T-cell (primary cell): ENCODE measurements at regions of chr13 and their contacts with region 1.

Region 1: GRCh38 chr13:64791373-64791772 is 2438.8 kb downstream of the PCDH9 start:
- DNase-seq: no peak
- ATAC-seq: no peak
- H3K4me3 ChIP-seq: no peak overlapping the region
- H3K4me3 Mint-ChIP-seq: no peak overlapping the region
- H3K27ac ChIP-seq: no peak overlapping the region
- H3K27ac Mint-ChIP-seq: no peak overlapping the region
- H3K4me1 ChIP-seq: no peaks in the 10 kb centered on the region
- H3K4me1 Mint-ChIP-seq: no peaks in the 10 kb centered on the region
- H3K27me3 ChIP-seq: no peaks in the 10 kb centered on the region
- H3K27me3 Mint-ChIP-seq: no peaks in the 10 kb centered on the region

Region 2: GRCh38 chr13:64553411-64554129 is 237.8 kb before region 1 on chr13:
- CTCF ChIA-PET with region 1: no interaction called
- POLR2A ChIA-PET with region 1: no interaction called
- DNase-seq: no peak
- ATAC-seq: no peak
- H3K4me3 ChIP-seq: no peak overlapping the region
- H3K4me3 Mint-ChIP-seq: no peak overlapping the region
- H3K27ac ChIP-seq: no peak overlapping the region
- H3K27ac Mint-ChIP-seq: no peak overlapping the region
- H3K4me1 ChIP-seq: no peaks in the 10 kb centered on the region
- H3K4me1 Mint-ChIP-seq: no peaks in the 10 kb centered on the region
- H3K27me3 ChIP-seq: no peaks in the 10 kb centered on the region
- H3K27me3 Mint-ChIP-seq: no peaks in the 10 kb centered on the region

Region 3: DNA sequence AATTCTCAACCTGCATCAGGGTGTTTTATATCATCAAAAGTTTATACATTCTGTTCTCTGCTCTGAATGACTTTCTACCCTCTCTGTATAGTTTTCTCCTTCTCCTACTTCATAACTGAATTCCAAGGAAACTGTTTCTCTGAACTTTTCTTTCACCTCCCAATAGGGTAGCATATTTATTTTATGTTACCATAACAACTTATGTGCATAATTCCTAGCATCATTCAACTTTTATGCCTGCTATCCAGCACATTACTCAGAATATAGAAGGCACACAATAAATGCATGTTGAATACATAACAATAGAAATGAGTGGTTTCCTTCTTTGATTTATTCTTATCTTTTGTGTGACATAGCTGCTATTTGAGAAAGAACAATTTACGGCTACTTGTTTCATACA is 53.7 kb after region 1 on chr13:
- CTCF ChIA-PET with region 1: no interaction called
- POLR2A ChIA-PET with region 1: interaction called in 1 of 2 experiments, 11 read pairs
- DNase-seq: no peak
- ATAC-seq: no peak
- H3K4me3 ChIP-seq: no peak overlapping the region
- H3K4me3 Mint-ChIP-seq: no peak overlapping the region
- H3K27ac ChIP-seq: no peak overlapping the region
- H3K27ac Mint-ChIP-seq: no peak overlapping the region
- H3K4me1 ChIP-seq: no peaks in the 10 kb centered on the region
- H3K4me1 Mint-ChIP-seq: no peaks in the 10 kb centered on the region
- H3K27me3 ChIP-seq: no peaks in the 10 kb centered on the region
- H3K27me3 Mint-ChIP-seq: no peaks in the 10 kb centered on the region